MCF 10A (cell line): ENCODE measurements at regions of chr2 and their contacts with region 1.

Region 1: GRCh38 chr2:128090945-128091725 is at the start of gene UGGT1:
- DNase-seq: peak; percentile 97
- H3K4me3 Mint-ChIP-seq: peak within 1 kb of the TSS; percentile 88
- H3K27ac Mint-ChIP-seq: peak within 1 kb of the TSS; percentile 92
- H3K4me1 Mint-ChIP-seq: peaks cover 12% of the 10 kb centered on the region
- H3K27me3 Mint-ChIP-seq: no peaks in the 10 kb centered on the region
- CTCF ChIP-seq: no peak
- total RNA-seq, gene UGGT1: 80.3 and 102 TPM in 2 replicates

Region 2: GRCh38 chr2:127857265-127857808 is 233.8 kb before region 1 on chr2:
- CTCF ChIA-PET with region 1: no interaction called
- POLR2A ChIA-PET with region 1: interaction called, 9 read pairs
- intact Hi-C with region 1: loop called (anchors 5 kb)
- DNase-seq: peak; percentile 25
- H3K4me3 Mint-ChIP-seq: peak overlapping the region; percentile 85
- H3K27ac Mint-ChIP-seq: peak overlapping the region; percentile 87
- H3K4me1 Mint-ChIP-seq: peaks cover 20% of the 10 kb centered on the region
- H3K27me3 Mint-ChIP-seq: no peaks in the 10 kb centered on the region
- CTCF ChIP-seq: no peak

Region 3: DNA sequence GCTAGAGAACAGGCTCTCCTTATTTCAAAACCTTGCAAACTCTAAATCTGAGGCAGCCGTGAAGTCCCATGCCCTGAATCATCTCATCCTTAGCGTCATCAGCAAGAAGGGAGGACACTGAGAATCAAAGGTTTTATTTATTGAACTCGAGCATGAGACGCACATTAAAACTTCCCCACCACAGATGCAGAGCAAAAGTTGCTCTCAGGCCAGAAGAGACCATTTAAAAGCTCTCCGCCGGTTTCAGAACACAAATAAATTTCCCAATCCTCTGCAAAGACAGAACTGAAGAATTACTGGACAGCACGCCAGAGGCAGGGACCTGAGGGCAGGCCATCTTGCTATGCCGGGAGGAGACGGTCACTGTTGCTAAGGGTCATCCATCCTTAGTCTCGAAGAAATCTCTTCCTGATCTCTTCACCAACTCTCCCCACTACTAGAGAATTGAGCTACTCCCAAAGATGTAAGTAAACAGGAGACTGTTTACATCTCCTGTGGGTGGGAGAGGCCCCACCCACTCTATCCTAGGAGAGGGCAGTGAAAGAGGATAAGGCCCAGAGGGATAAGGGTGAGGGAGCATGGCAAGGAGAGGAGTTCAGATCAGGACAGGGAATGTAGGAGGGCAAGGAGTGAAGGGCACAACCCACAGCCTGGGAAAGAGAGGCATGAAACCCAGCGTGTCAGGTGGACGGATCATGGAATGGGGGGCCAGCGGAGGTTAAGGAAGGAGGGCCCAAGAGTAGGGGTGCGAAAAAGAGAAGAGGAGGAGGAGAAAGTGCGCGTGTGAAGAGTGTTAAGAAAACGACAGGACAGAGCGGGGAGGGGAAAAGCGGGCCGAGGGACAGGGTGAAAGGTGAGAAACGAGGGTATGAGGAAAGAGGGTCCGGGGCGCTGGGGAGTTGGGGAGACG is 206.4 kb before region 1 on chr2:
- CTCF ChIA-PET with region 1: interaction called, 3 read pairs
- POLR2A ChIA-PET with region 1: interaction called, 12 read pairs
- intact Hi-C with region 1: loop called (anchors 2 kb)
- DNase-seq: peak; percentile 31
- H3K4me3 Mint-ChIP-seq: peak overlapping the region; percentile 81
- H3K27ac Mint-ChIP-seq: peak overlapping the region; percentile 84
- H3K4me1 Mint-ChIP-seq: peaks cover 19% of the 10 kb centered on the region
- H3K27me3 Mint-ChIP-seq: no peaks in the 10 kb centered on the region
- CTCF ChIP-seq: no peak

Region 4: GRCh38 chr2:127901339-127902056 is 189.6 kb before region 1 on chr2:
- CTCF ChIA-PET with region 1: no interaction called
- POLR2A ChIA-PET with region 1: no interaction called
- intact Hi-C with region 1: no loop called
- DNase-seq: no peak
- H3K4me3 Mint-ChIP-seq: no peak overlapping the region
- H3K27ac Mint-ChIP-seq: no peak overlapping the region
- H3K4me1 Mint-ChIP-seq: no peaks in the 10 kb centered on the region
- H3K27me3 Mint-ChIP-seq: no peaks in the 10 kb centered on the region
- CTCF ChIP-seq: no peak

Region 5: GRCh38 chr2:128027801-128028667 is 63.1 kb before region 1 on chr2 and contains the start of gene SAP130:
- CTCF ChIA-PET with region 1: no interaction called
- POLR2A ChIA-PET with region 1: interaction called, 27 read pairs
- intact Hi-C with region 1: loop called (anchors 1 kb)
- DNase-seq: peak; percentile 94
- H3K4me3 Mint-ChIP-seq: peak within 1 kb of the TSS; percentile 92
- H3K27ac Mint-ChIP-seq: peak within 1 kb of the TSS; percentile 57
- H3K4me1 Mint-ChIP-seq: peaks cover 7% of the 10 kb centered on the region
- H3K27me3 Mint-ChIP-seq: no peaks in the 10 kb centered on the region
- CTCF ChIP-seq: no peak
- total RNA-seq, gene SAP130: 18.8 and 23.5 TPM in 2 replicates

Region 6: DNA sequence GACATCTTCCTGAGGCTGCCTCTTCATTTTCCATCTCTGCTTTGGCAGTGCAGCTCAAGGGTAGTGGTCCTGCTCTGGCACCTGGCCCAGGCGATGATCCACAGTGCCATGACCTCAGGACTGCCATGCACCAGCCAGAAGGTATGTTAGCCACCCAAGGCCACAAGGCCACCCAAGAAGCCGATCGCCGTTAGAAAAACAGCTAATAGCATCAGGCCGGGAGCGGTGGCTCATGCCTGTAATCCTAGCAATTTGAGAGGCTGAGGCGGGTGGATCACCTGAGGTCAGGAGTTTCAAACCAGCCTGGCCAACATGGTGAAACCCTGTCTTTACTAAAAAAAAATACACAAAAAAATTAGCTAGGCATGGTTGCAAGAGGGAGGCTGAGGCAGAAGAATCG is 28.6 kb before region 1 on chr2:
- CTCF ChIA-PET with region 1: interaction called, 9 read pairs
- POLR2A ChIA-PET with region 1: interaction called, 3 read pairs
- intact Hi-C with region 1: loop called (anchors 2 kb)
- DNase-seq: no peak
- H3K4me3 Mint-ChIP-seq: no peak overlapping the region
- H3K27ac Mint-ChIP-seq: no peak overlapping the region
- H3K4me1 Mint-ChIP-seq: no peaks in the 10 kb centered on the region
- H3K27me3 Mint-ChIP-seq: no peaks in the 10 kb centered on the region
- CTCF ChIP-seq: no peak

Region 7: DNA sequence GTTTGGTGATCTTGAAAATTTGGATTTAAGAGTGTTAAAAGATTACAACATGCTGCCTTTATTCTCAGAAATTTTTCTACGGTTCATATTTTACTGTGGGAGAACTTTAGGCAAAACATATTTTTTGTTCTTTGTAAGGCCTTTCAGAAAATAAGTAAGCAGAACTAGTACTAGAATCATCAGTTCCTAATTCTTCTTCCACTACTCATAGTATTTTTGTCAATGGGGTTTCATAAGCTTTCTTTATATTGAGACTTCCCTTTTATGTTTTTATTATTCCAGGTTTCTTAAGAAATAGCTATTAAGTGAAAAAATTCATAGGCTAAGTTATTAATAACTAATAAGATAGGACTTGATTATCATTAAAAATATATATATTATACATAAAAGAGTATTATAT is 12.3 kb after region 1 on chr2:
- CTCF ChIA-PET with region 1: interaction called, 6 read pairs
- POLR2A ChIA-PET with region 1: interaction called, 26 read pairs
- intact Hi-C with region 1: no loop called
- DNase-seq: no peak
- H3K4me3 Mint-ChIP-seq: no peak overlapping the region
- H3K27ac Mint-ChIP-seq: no peak overlapping the region
- H3K4me1 Mint-ChIP-seq: no peaks in the 10 kb centered on the region
- H3K27me3 Mint-ChIP-seq: no peaks in the 10 kb centered on the region
- CTCF ChIP-seq: no peak

Region 8: DNA sequence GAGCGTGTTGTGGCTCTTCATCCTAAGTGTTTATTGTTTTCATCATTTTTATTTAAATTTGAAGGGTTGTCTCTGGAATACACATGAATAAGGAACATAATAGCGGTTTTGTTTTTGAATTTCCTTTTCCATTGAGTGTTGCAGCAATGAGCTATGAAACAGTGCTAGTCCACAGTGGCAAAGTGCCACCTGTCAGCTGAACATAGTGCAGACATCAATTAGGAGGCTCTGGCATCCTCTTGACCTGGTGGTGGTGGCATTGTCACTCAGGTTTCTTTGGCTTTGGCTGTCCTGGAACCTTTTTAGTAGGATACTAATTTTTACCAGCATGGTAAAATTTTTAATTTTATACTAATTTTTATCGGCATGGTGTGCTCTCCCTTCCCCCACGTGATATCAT is 63.1 kb after region 1 on chr2:
- CTCF ChIA-PET with region 1: no interaction called
- POLR2A ChIA-PET with region 1: no interaction called
- intact Hi-C with region 1: no loop called
- DNase-seq: no peak
- H3K4me3 Mint-ChIP-seq: no peak overlapping the region
- H3K27ac Mint-ChIP-seq: no peak overlapping the region
- H3K4me1 Mint-ChIP-seq: no peaks in the 10 kb centered on the region
- H3K27me3 Mint-ChIP-seq: no peaks in the 10 kb centered on the region
- CTCF ChIP-seq: no peak